Activated B cell treated with CpG ODN at 0.5 μM for 24 hours (primary cell): ENCODE measurements at regions of chr2 and their contacts with region 1.

Region 1: GRCh38 chr2:161160226-161161069 is at the start of gene TANK:
- DNase-seq: peak; percentile 82
- ATAC-seq: peak; percentile 92
- H3K4me3 Mint-ChIP-seq: peak within 1 kb of the TSS; percentile 89
- H3K27ac Mint-ChIP-seq: peak within 1 kb of the TSS; percentile 91
- H3K4me1 Mint-ChIP-seq: peaks cover 77% of the 10 kb centered on the region
- H3K27me3 Mint-ChIP-seq: no peaks in the 10 kb centered on the region
- CTCF ChIP-seq: no peak
- total RNA-seq, gene TANK: 130 and 150 TPM in 2 replicates

Region 2: DNA sequence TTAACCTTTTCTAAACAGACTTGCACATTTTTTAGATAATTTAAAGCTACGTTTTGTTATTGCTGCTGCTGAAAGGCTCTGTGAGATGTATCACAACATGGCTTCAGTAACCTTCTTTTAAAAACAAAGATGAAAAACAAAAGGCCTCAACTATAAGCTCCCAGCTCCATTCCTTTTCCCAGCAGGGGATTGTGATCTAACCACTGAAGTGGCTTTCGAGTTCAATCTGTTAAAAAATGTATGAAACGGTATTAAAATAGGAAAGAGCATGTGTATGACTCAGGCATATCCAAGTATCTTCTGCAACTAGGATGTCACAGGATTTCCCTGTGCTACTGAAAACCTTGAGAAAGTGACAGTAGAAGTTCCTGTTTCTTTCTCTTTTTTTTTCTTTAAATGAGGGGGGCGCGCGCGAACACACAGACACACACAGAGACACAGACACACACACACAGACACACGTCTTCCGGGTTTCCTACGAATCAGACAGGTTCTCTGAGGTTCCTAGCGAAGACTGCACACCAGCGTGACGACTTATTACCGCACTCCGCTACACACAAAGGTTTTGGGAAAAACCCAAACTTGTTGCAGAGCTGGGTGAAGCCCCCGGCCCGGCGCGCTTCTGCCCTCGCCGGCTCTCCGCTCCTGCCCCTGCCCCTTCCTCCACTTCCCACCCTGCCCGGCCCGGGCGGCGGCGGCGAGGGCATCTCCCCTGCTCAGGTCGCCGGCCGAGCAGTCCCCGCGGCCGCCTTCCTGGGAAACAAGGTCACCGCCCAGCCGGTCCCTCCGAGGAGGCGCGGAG is 753.7 kb before region 1 on chr2:
- CTCF ChIA-PET with region 1: no interaction called
- POLR2A ChIA-PET with region 1: no interaction called
- intact Hi-C with region 1: loop called (anchors 1 kb)
- DNase-seq: peak; percentile 71
- ATAC-seq: peak; percentile 74
- H3K4me3 Mint-ChIP-seq: peak overlapping the region; percentile 91
- H3K27ac Mint-ChIP-seq: peak overlapping the region; percentile 92
- H3K4me1 Mint-ChIP-seq: peaks cover 77% of the 10 kb centered on the region
- H3K27me3 Mint-ChIP-seq: no peaks in the 10 kb centered on the region
- CTCF ChIP-seq: no peak

Region 3: DNA sequence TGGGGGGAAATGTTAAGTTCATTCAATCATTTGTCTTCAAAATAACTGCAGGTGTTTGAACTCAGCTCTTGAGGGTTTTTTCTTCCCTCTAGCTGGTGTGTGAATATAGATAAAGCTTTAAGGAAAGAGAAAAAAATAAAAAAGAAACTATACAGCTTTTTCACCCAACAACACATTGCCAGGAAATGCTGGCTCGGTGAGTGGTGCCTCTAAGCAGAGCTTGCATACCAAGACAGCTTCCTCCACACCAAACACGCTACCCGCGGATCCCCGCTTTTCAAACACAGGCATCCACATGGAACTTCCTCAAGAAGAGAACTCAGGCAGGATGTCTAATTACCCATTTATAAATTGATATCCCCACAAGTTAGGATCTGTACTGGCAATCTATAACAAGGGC is 70.0 kb before region 1 on chr2:
- CTCF ChIA-PET with region 1: no interaction called
- POLR2A ChIA-PET with region 1: interaction called, 5 read pairs
- intact Hi-C with region 1: loop called (anchors 2 kb)
- DNase-seq: no peak
- ATAC-seq: no peak
- H3K4me3 Mint-ChIP-seq: peak overlapping the region; percentile 76
- H3K27ac Mint-ChIP-seq: peak overlapping the region; percentile 83
- H3K4me1 Mint-ChIP-seq: peaks cover 48% of the 10 kb centered on the region
- H3K27me3 Mint-ChIP-seq: no peaks in the 10 kb centered on the region
- CTCF ChIP-seq: no peak

Region 4: GRCh38 chr2:161147856-161148569 is 12.4 kb before region 1 on chr2:
- CTCF ChIA-PET with region 1: no interaction called
- POLR2A ChIA-PET with region 1: interaction called, 6 read pairs
- intact Hi-C with region 1: loop called (anchors 1 kb)
- DNase-seq: no peak
- ATAC-seq: peak; percentile 58
- H3K4me3 Mint-ChIP-seq: no peak overlapping the region
- H3K27ac Mint-ChIP-seq: peak overlapping the region; percentile 50
- H3K4me1 Mint-ChIP-seq: peaks cover 74% of the 10 kb centered on the region
- H3K27me3 Mint-ChIP-seq: no peaks in the 10 kb centered on the region
- CTCF ChIP-seq: no peak

Region 5: DNA sequence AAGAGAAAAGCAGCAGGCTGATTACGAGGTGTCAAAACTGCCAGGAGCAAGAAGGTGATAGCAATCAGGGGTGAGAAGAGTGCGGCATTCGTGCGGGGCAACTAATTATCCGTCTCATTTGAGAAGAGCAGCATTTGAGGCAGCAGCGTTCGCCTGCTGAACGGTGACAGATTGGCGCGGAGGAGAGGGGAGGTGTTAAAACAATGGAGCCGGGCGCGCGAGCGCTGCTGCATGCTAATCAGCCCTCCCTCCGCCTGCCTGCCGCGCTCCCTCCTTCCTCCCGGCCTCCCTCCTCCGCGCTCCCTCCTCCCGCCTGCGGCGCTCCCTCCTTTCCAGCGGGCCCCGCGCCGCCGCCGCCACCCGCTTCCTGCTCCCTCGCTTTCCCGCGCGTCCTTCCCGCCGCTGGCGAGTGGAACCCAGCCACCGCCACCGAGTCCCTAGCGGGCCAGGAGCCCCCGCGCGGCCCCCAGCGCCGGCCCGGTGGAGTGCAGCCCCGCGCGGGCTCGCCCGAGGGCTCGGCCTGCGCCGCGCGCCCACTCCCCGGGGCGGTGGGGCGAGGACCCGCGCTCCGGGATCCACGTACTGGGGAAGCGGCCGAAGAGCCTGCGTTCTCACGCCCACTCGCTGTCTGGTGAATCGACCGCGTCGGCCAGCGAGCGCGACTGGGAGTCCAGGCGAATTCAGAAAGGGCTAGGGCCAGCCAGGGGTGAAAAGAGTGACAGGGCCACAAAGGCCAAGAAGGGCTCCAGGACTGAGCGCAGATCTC is 78.3 kb after region 1 on chr2:
- CTCF ChIA-PET with region 1: no interaction called
- POLR2A ChIA-PET with region 1: interaction called, 6 read pairs
- intact Hi-C with region 1: loop called (anchors 5 kb)
- DNase-seq: peak; percentile 41
- ATAC-seq: peak; percentile 45
- H3K4me3 Mint-ChIP-seq: peak overlapping the region; percentile 86
- H3K27ac Mint-ChIP-seq: peak overlapping the region; percentile 54
- H3K4me1 Mint-ChIP-seq: peaks cover 55% of the 10 kb centered on the region
- H3K27me3 Mint-ChIP-seq: peaks cover 2% of the 10 kb centered on the region
- CTCF ChIP-seq: no peak

Region 6: GRCh38 chr2:162318328-162319180 is 1158.1 kb after region 1 on chr2 and contains the start of gene IFIH1:
- CTCF ChIA-PET with region 1: no interaction called
- POLR2A ChIA-PET with region 1: no interaction called
- intact Hi-C with region 1: loop called (anchors 10 kb)
- DNase-seq: peak; percentile 72
- ATAC-seq: peak; percentile 93
- H3K4me3 Mint-ChIP-seq: peak within 1 kb of the TSS; percentile 94
- H3K27ac Mint-ChIP-seq: peak within 1 kb of the TSS; percentile 99
- H3K4me1 Mint-ChIP-seq: peaks cover 68% of the 10 kb centered on the region
- H3K27me3 Mint-ChIP-seq: no peaks in the 10 kb centered on the region
- CTCF ChIP-seq: no peak
- total RNA-seq, gene IFIH1: 61.8 and 63.0 TPM in 2 replicates